ENCODE measurements at regions of chr3 and their contacts with region 1.

Region 1: DNA sequence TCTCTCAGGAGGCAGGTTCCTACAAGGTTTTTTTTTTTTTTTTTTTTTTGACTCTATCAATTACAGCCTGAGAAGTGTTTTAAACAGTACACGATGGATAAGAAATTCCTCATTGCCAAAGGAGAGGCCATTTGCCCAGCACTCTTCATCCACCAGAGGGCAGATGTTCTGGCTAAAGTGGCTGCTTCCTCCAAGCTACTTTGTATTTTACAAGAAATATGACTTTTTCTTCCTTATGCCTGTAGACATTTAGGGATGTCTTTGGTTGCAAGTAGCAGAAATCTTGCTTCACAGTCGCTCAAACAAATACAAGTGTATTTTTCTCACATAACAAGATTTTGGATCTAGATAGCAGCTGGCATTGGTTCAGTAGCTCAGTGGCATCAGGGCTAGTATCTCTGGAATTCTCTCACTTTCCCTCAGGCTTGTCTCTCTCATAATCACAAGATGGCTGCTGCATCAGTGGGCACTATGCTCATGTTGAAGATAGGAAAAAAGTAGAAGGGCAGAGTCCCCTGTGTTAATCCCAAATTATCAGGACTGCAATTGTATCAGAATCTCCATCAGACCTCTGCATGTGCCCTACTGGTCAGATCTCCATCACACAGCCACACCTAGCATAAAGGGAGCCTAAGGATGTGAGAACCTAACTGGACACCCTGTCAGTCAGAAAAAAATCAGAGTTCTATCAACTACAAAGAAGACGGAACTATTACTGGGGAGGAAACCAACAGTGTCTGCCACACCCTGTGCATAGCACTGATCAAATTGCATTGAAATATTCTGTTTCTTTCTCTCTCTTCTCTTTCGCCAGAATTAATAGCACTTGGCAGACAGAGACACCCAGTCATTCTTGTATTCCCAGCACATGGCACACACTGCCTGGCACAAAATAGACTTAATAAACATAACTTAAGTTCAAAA is 138.9 kb upstream of the COL8A1 start:
- DNase-seq: peak; percentile 50 to 54
- H3K4me3 ChIP-seq: no peak overlapping the region
- H3K27ac ChIP-seq: no peak overlapping the region
- H3K4me1 ChIP-seq: no peaks in the 10 kb centered on the region
- H3K27me3 ChIP-seq: no peaks in the 10 kb centered on the region
- CTCF ChIP-seq: peak in 5 of 6 experiments; percentile 38 to 68 (median 59)
- POLR2A ChIP-seq: no peak

Region 2: GRCh38 chr3:99627062-99627826 is 127.7 kb after region 1 on chr3:
- intact Hi-C with region 1: loop called (anchors 10 kb)
- DNase-seq: no peak
- H3K4me3 ChIP-seq: no peak overlapping the region
- H3K27ac ChIP-seq: no peak overlapping the region
- H3K4me1 ChIP-seq: peaks cover 11 to 13% of the 10 kb centered on the region in 2 donors
- H3K27me3 ChIP-seq: no peaks in the 10 kb centered on the region
- CTCF ChIP-seq: no peak
- POLR2A ChIP-seq: no peak

Measured in thyroid gland (tissue), 4 donors.